H1 (cell line): ENCODE measurements at regions of chr16 and their contacts with region 1.

Region 1: GRCh38 chr16:85341972-85342695 is 229.9 kb upstream of the CIBAR2 start:
- DNase-seq: no peak
- H3K4me3 ChIP-seq: no peak overlapping the region
- H3K27ac ChIP-seq: no peak overlapping the region
- H3K4me1 ChIP-seq: peaks cover 0 to 5% (median 0%) of the 10 kb centered on the region in 4 experiments; a peak in 1 of 7 replicates
- H3K27me3 ChIP-seq: peaks cover 0 to 3% (median under 1%) of the 10 kb centered on the region in 4 experiments; a peak in 2 of 7 replicates
- CTCF ChIP-seq: no peak
- EP300 ChIP-seq: no peak
- POLR2A ChIP-seq: no peak
- RAD21 ChIP-seq: no peak

Region 2: GRCh38 chr16:85354686-85355514 is 12.8 kb after region 1 on chr16:
- CTCF ChIA-PET with region 1: interaction called, 16 read pairs
- POLR2A ChIA-PET with region 1: interaction called, 3 read pairs
- DNase-seq: no peak
- H3K4me3 ChIP-seq: no peak overlapping the region
- H3K27ac ChIP-seq: no peak overlapping the region
- H3K4me1 ChIP-seq: peaks cover 0 to 8% (median 3%) of the 10 kb centered on the region in 4 experiments; a peak in 3 of 7 replicates
- H3K27me3 ChIP-seq: no peaks in the 10 kb centered on the region
- CTCF ChIP-seq: no peak
- EP300 ChIP-seq: no peak
- POLR2A ChIP-seq: no peak
- RAD21 ChIP-seq: no peak